PC-9 (cell line): ENCODE measurements at regions of chr6 and their contacts with region 1.

Region 1: DNA sequence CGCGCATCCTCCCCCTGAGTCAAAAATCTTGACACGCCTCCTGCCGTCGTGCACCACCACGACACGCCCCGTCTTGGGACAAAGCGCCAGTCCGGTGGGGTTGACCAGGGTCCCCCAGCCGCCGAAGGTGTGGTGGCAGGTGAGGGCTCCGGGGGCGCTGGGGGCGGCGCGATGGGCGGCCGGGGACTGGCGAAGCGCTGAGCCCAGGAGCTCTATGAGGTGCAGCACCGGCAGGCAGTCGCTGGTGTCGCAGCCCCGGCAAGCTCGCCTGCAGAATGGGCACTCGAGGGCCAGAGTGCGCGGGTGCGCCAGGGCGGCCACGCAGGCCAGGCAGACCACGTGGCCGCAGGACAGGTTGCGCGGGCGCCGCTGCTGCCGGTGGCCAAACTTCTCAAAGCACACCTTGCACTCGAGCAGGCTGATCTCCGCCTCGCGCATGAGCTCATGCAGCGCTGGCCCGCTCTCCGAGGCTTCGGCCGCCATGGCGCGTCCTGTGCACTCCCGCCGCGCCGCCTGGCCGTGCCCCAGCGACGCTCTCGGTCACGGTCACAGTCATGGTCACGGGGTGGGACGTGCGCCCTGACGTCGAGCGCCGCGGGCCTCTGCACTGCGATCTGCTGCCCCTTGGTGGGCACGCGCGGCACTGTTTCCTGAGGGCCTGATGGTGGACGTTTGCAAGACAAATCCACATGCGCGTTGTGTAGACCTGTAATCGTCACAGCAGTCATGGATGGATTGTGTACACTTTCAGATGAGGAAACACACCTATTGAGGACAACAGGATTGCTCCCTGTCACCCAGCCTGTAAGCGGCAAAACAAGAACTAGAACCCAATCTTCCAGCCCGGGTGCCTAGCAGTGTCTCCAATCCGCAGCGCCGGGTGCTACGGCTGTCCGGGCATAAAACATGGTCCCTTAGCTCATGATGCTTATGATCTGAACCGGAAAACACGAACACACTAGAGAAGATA is at the start of gene NHLRC1:
- DNase-seq: peak; percentile 42 to 88
- H3K4me3 ChIP-seq: peak within 1 kb of the TSS; percentile 19; the same call in 1 of the 2 replicates
- H3K27ac ChIP-seq: no peak within 1 kb of the TSS
- H3K4me1 ChIP-seq: no peaks in the 10 kb centered on the region
- H3K27me3 ChIP-seq: no peaks in the 10 kb centered on the region
- CTCF ChIP-seq: peak; percentile 76
- total RNA-seq, gene NHLRC1: 0.90 and 1.0 TPM in 2 replicates

Region 2: GRCh38 chr6:17831135-17831534 is 291.3 kb before region 1 on chr6:
- CTCF ChIA-PET with region 1: interaction called, 3 read pairs
- POLR2A ChIA-PET with region 1: no interaction called
- intact Hi-C with region 1: loop called (anchors 1 kb)
- DNase-seq: no peak
- H3K4me3 ChIP-seq: no peak overlapping the region
- H3K27ac ChIP-seq: no peak overlapping the region
- H3K4me1 ChIP-seq: no peaks in the 10 kb centered on the region
- H3K27me3 ChIP-seq: no peaks in the 10 kb centered on the region
- CTCF ChIP-seq: no peak

Region 3: DNA sequence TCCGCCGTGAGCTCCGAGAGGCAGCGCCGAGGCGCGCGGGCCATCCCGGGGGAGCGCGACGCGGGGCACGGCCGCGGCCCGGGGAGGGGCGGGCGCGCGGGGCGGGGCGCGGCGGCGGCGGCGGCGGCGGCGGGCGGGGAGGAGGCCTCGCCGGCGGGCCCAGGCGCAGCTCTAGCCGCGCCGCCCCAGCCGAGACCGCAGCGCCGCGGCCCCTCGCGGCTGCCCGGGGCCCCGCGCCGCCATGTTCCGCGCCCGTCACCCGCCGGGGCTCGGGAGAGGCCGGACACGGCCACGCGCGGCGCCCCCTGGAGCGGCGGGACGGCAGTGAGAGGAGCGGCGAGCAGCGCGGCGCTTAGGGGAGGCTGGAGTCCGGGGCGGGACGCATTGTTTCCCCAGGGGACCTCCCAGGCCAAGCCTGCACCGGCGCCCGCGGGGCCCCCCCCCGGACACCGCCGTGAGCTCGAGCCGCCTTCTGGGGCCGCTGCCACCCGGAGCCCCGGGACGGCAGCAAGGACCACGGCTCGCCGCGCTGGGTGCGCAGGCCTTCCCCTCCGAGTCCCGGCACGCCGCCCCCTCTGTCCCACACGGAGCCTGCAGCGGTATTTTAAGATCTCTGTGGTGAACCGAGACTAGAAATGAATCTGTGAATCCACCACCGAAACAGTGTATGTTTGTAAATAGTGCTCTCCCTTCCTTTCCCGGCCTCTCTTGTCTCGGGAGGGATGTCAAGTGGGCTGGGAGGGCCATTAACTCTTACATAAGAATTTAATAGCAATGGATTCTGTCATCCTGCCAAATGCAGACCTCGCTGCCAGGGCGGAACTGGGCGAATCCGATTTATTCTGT is 134.6 kb before region 1 on chr6 and contains the start of gene KIF13A:
- CTCF ChIA-PET with region 1: interaction called, 5 read pairs
- POLR2A ChIA-PET with region 1: interaction called, 4 read pairs
- intact Hi-C with region 1: loop called (anchors 1 kb)
- DNase-seq: peak; percentile 46 to 69
- H3K4me3 ChIP-seq: peak within 1 kb of the TSS; percentile 98
- H3K27ac ChIP-seq: peak within 1 kb of the TSS; percentile 45
- H3K4me1 ChIP-seq: peaks cover 59% of the 10 kb centered on the region
- H3K27me3 ChIP-seq: no peaks in the 10 kb centered on the region
- CTCF ChIP-seq: no peak
- total RNA-seq, gene KIF13A: 48.6 and 52.2 TPM in 2 replicates

Region 4: GRCh38 chr6:18110162-18110561 is 12.2 kb before region 1 on chr6:
- CTCF ChIA-PET with region 1: no interaction called
- POLR2A ChIA-PET with region 1: no interaction called
- intact Hi-C with region 1: no loop called
- DNase-seq: no peak
- H3K4me3 ChIP-seq: no peak overlapping the region
- H3K27ac ChIP-seq: no peak overlapping the region
- H3K4me1 ChIP-seq: no peaks in the 10 kb centered on the region
- H3K27me3 ChIP-seq: no peaks in the 10 kb centered on the region
- CTCF ChIP-seq: no peak